CD4-positive, alpha-beta T cell (primary cell): ENCODE measurements at regions of chr18 and their contacts with region 1.

Region 1: GRCh38 chr18:49486953-49487710 is at the start of gene C18orf32:
- DNase-seq: peak; percentile 85 to 96 (median 92)
- ATAC-seq: peak; percentile 87
- H3K4me3 ChIP-seq: peak within 1 kb of the TSS; percentile 89
- H3K4me3 Mint-ChIP-seq: peak within 1 kb of the TSS; percentile 96
- H3K27ac ChIP-seq: peak within 1 kb of the TSS; percentile 84 to 89
- H3K27ac Mint-ChIP-seq: peak within 1 kb of the TSS; percentile 93
- H3K4me1 ChIP-seq: peaks cover 51% of the 10 kb centered on the region
- H3K4me1 Mint-ChIP-seq: peaks cover 66% of the 10 kb centered on the region
- H3K27me3 ChIP-seq: no peaks in the 10 kb centered on the region
- H3K27me3 Mint-ChIP-seq: no peaks in the 10 kb centered on the region
- CTCF ChIP-seq: no peak
- total RNA-seq, gene C18orf32: 38.2 to 40.1 TPM

Region 2: DNA sequence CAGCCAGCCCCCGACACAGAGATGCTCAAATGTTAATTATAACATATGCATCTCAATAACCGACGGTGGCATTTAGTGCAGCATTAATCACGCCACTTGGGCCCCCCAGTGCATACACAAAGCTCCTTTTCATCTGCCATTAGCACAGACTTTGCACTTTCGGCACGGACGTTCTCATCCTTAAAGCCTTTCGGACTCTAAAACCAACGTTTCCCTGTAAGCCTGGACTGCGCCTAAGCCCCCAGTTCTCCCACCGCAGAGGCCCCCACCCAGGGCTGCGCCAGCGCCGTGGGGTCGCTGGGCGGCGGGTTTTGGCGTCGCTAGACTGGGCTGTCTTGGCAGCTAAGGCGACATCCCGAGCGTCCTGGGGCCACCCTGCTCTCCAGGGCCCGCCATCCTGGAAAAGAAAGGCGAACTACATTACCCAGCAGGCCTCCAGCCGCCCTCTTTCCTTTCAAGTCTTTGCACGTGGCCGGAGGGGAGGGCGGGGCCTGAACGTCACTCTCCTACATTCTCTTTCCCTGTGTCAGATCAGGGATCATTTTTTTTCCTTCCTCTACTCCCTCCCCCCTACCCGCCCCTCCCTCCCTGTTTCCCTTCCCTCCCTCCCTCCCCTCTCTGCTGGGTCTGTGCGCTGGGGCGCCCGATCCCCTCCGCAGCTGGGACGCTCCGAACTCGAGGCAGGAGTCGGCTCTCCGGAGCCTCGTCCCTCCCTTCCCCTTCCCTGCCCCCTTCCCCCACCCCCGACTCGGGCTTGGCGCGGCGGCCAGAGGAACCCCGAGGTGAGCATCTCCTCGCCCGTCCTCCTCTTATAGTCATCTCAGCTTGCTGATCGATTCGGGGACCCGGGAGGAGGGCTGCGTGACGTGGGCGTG is 948.4 kb before region 1 on chr18 and contains the start of gene CTIF:
- CTCF ChIA-PET with region 1: no interaction called
- POLR2A ChIA-PET with region 1: no interaction called
- intact Hi-C with region 1: loop called in 1 of 2 experiments (anchors 10 kb)
- DNase-seq: peak; percentile 23 to 80 (median 46)
- ATAC-seq: peak; percentile 61
- H3K4me3 ChIP-seq: peak within 1 kb of the TSS; percentile 74
- H3K4me3 Mint-ChIP-seq: peak within 1 kb of the TSS; percentile 95
- H3K27ac ChIP-seq: no peak within 1 kb of the TSS
- H3K27ac Mint-ChIP-seq: no peak within 1 kb of the TSS
- H3K4me1 ChIP-seq: peaks cover 24% of the 10 kb centered on the region
- H3K4me1 Mint-ChIP-seq: peaks cover 3% of the 10 kb centered on the region
- H3K27me3 ChIP-seq: peaks cover 10 to 12% of the 10 kb centered on the region in 2 experiments
- H3K27me3 Mint-ChIP-seq: peaks cover 29% of the 10 kb centered on the region
- CTCF ChIP-seq: no peak
- total RNA-seq, gene CTIF: 1.1 to 2.9 TPM

Region 3: GRCh38 chr18:49459404-49460171 is 27.5 kb before region 1 on chr18:
- CTCF ChIA-PET with region 1: interaction called, 5 read pairs
- POLR2A ChIA-PET with region 1: interaction called, 44 read pairs
- intact Hi-C with region 1: loop called (anchors 1 kb)
- DNase-seq: peak in 9 of 14 experiments; percentile 4 to 63 (median 13)
- ATAC-seq: peak; percentile 9
- H3K4me3 ChIP-seq: peak overlapping the region; percentile 76
- H3K4me3 Mint-ChIP-seq: peak overlapping the region; percentile 95
- H3K27ac ChIP-seq: peak overlapping the region in 1 of 2 donors; percentile 54
- H3K27ac Mint-ChIP-seq: peak overlapping the region; percentile 87
- H3K4me1 ChIP-seq: peaks cover 23% of the 10 kb centered on the region
- H3K4me1 Mint-ChIP-seq: peaks cover 58% of the 10 kb centered on the region
- H3K27me3 ChIP-seq: no peaks in the 10 kb centered on the region
- H3K27me3 Mint-ChIP-seq: no peaks in the 10 kb centered on the region
- CTCF ChIP-seq: no peak

Region 4: GRCh38 chr18:49819823-49820671 is 332.9 kb after region 1 on chr18:
- CTCF ChIA-PET with region 1: no interaction called
- POLR2A ChIA-PET with region 1: no interaction called
- intact Hi-C with region 1: loop called in 1 of 2 experiments (anchors 5 kb)
- DNase-seq: peak in 13 of 14 experiments; percentile 10 to 88 (median 39)
- ATAC-seq: peak; percentile 90
- H3K4me3 ChIP-seq: peak overlapping the region; percentile 17
- H3K4me3 Mint-ChIP-seq: peak overlapping the region; percentile 81
- H3K27ac ChIP-seq: peak overlapping the region; percentile 27 to 61
- H3K27ac Mint-ChIP-seq: peak overlapping the region; percentile 84
- H3K4me1 ChIP-seq: peaks cover 40% of the 10 kb centered on the region
- H3K4me1 Mint-ChIP-seq: peaks cover 62% of the 10 kb centered on the region
- H3K27me3 ChIP-seq: no peaks in the 10 kb centered on the region
- H3K27me3 Mint-ChIP-seq: no peaks in the 10 kb centered on the region
- CTCF ChIP-seq: no peak

Region 5: GRCh38 chr18:50281295-50281971 is 794.3 kb after region 1 on chr18 and contains the start of gene MBD1:
- CTCF ChIA-PET with region 1: interaction called, 3 read pairs
- POLR2A ChIA-PET with region 1: interaction called, 15 read pairs
- intact Hi-C with region 1: loop called (anchors 5 kb)
- DNase-seq: peak; percentile 93 to 100 (median 96)
- ATAC-seq: peak; percentile 90
- H3K4me3 ChIP-seq: peak within 1 kb of the TSS; percentile 93
- H3K4me3 Mint-ChIP-seq: peak within 1 kb of the TSS; percentile 100
- H3K27ac ChIP-seq: peak within 1 kb of the TSS; percentile 84 to 90
- H3K27ac Mint-ChIP-seq: peak within 1 kb of the TSS; percentile 98
- H3K4me1 ChIP-seq: peaks cover 31% of the 10 kb centered on the region
- H3K4me1 Mint-ChIP-seq: peaks cover 38% of the 10 kb centered on the region
- H3K27me3 ChIP-seq: no peaks in the 10 kb centered on the region
- H3K27me3 Mint-ChIP-seq: no peaks in the 10 kb centered on the region
- CTCF ChIP-seq: no peak
- total RNA-seq, gene MBD1: 103 to 107 TPM

Region 6: GRCh38 chr18:50374753-50375391 is 887.7 kb after region 1 on chr18 and contains the start of gene SKA1:
- CTCF ChIA-PET with region 1: no interaction called
- POLR2A ChIA-PET with region 1: no interaction called
- intact Hi-C with region 1: loop called in 1 of 2 experiments (anchors 5 kb)
- DNase-seq: peak; percentile 84 to 96 (median 90)
- ATAC-seq: peak; percentile 100
- H3K4me3 ChIP-seq: peak within 1 kb of the TSS; percentile 77
- H3K4me3 Mint-ChIP-seq: peak within 1 kb of the TSS; percentile 80
- H3K27ac ChIP-seq: peak within 1 kb of the TSS; percentile 56 to 58
- H3K27ac Mint-ChIP-seq: peak within 1 kb of the TSS; percentile 81
- H3K4me1 ChIP-seq: peaks cover 12% of the 10 kb centered on the region
- H3K4me1 Mint-ChIP-seq: peaks cover 14% of the 10 kb centered on the region
- H3K27me3 ChIP-seq: peaks cover 0 to 3% of the 10 kb centered on the region in 2 experiments
- H3K27me3 Mint-ChIP-seq: no peaks in the 10 kb centered on the region
- CTCF ChIP-seq: no peak
- total RNA-seq, gene SKA1: 0.08 to 0.20 TPM

Region 7: GRCh38 chr18:51171223-51171622 is 1684.1 kb after region 1 on chr18:
- CTCF ChIA-PET with region 1: no interaction called
- POLR2A ChIA-PET with region 1: no interaction called
- intact Hi-C with region 1: loop called in 1 of 2 experiments (anchors 10 kb)
- DNase-seq: no peak
- ATAC-seq: no peak
- H3K4me3 ChIP-seq: no peak overlapping the region
- H3K4me3 Mint-ChIP-seq: no peak overlapping the region
- H3K27ac ChIP-seq: no peak overlapping the region
- H3K27ac Mint-ChIP-seq: peak overlapping the region; percentile 61
- H3K4me1 ChIP-seq: no peaks in the 10 kb centered on the region
- H3K4me1 Mint-ChIP-seq: peaks cover 50% of the 10 kb centered on the region
- H3K27me3 ChIP-seq: no peaks in the 10 kb centered on the region
- H3K27me3 Mint-ChIP-seq: no peaks in the 10 kb centered on the region
- CTCF ChIP-seq: no peak